Panc1 (cell line): ENCODE measurements at regions of chr7 and their contacts with region 1.

Region 1: DNA sequence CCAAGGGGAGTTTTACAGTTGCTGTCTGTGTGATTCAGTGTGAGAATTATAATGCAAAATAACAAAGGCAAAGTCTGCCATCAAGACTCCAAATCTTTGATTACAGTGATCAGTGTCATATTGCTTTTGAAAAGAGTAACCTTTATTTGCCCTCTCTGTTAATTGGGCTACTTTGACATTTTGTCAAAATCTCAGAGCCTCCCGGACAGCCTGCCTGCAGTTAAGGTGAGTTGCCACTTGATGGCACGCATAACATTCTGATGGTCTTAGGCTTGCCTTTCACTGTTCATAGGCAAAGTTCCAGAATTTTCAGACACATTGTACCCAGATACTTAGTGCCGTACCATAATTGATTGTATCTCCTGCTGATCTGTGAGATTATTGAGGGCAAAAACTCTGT is 253.5 kb downstream of the ABCA13 start:
- DNase-seq: no peak
- ATAC-seq: no peak
- H3K4me3 ChIP-seq: no peak overlapping the region
- H3K27ac ChIP-seq: peak overlapping the region; percentile 56; the same call in 1 of the 2 replicates
- H3K4me1 ChIP-seq: peaks cover 25% of the 10 kb centered on the region
- H3K27me3 ChIP-seq: no peaks in the 10 kb centered on the region
- CTCF ChIP-seq: peak; percentile 88

Region 2: DNA sequence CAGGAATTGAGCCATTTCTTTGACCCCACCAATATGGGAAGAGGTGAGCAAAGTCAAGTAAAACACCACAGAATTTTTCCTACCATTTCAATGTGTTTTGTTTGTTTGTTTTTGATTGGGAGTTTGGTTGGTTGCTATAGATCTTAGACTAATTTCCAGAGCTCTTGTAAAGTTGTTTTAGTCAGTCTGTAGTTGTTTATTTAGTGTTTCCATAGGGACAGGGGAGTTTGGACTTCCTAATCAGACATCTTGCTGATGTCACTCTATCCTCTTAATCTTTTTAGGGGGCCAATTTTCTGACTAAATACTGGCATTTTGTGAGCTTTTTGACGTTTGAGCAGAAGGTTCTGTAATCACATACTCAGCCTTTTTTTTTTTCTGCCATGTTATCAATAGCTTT is 13.5 kb after region 1 on chr7:
- CTCF ChIA-PET with region 1: no interaction called
- POLR2A ChIA-PET with region 1: interaction called, 12 read pairs
- in situ Hi-C with region 1: no loop called
- intact Hi-C with region 1: no loop called
- DNase-seq: no peak
- ATAC-seq: no peak
- H3K4me3 ChIP-seq: no peak overlapping the region
- H3K27ac ChIP-seq: no peak overlapping the region; the same call in 1 of the 2 replicates
- H3K4me1 ChIP-seq: no peaks in the 10 kb centered on the region
- H3K27me3 ChIP-seq: no peaks in the 10 kb centered on the region
- CTCF ChIP-seq: no peak

Region 3: DNA sequence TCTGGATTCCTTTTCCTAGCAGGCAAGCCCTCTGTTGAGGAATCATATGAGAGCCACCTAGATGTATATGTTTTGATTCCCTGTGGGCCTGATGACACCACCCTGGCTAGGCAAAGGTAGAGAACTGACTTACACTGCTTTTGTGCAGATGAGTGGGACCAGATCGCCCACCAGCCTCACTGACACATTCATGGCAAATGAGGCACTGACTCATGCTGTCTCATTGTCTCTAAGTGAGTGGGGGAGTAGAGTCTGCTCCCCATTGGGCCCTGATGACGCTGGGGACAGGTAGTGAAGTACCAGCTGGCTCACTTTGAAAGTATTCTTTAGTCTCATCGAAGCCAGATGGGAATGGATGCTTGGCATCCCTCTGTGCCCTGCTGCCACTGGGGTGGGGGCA is 72.8 kb after region 1 on chr7:
- CTCF ChIA-PET with region 1: no interaction called
- POLR2A ChIA-PET with region 1: no interaction called
- in situ Hi-C with region 1: no loop called
- intact Hi-C with region 1: loop called (anchors 5 kb)
- DNase-seq: no peak
- ATAC-seq: no peak
- H3K4me3 ChIP-seq: no peak overlapping the region
- H3K27ac ChIP-seq: no peak overlapping the region
- H3K4me1 ChIP-seq: no peaks in the 10 kb centered on the region
- H3K27me3 ChIP-seq: no peaks in the 10 kb centered on the region
- CTCF ChIP-seq: no peak

Region 4: GRCh38 chr7:48875045-48875916 is 450.6 kb after region 1 on chr7:
- CTCF ChIA-PET with region 1: no interaction called
- POLR2A ChIA-PET with region 1: no interaction called
- in situ Hi-C with region 1: no loop called
- intact Hi-C with region 1: loop called (anchors 1 kb)
- DNase-seq: peak; percentile 18
- ATAC-seq: peak; percentile 99
- H3K4me3 ChIP-seq: no peak overlapping the region
- H3K27ac ChIP-seq: peak overlapping the region; percentile 32; the same call in 1 of the 2 replicates
- H3K4me1 ChIP-seq: 0 out of 2 replicates have a peak, but pooled peaks cover 2% of the 10 kb centered on the region
- H3K27me3 ChIP-seq: no peaks in the 10 kb centered on the region
- CTCF ChIP-seq: peak; percentile 91